T-cell (primary cell): ENCODE measurements at regions of chr17 and their contacts with region 1.

Region 1: GRCh38 chr17:40219073-40219860 is at the start of gene WIPF2:
- DNase-seq: peak; percentile 91 to 98 (median 94)
- ATAC-seq: peak; percentile 91 to 99 (median 97)
- H3K4me3 ChIP-seq: peak within 1 kb of the TSS; percentile 50 to 71
- H3K4me3 Mint-ChIP-seq: peak within 1 kb of the TSS; percentile 87 to 98 (median 95)
- H3K27ac ChIP-seq: peak within 1 kb of the TSS; percentile 92
- H3K27ac Mint-ChIP-seq: peak within 1 kb of the TSS; percentile 100
- H3K4me1 ChIP-seq: peaks cover 8 to 24% of the 10 kb centered on the region in 2 experiments
- H3K4me1 Mint-ChIP-seq: peaks cover 26 to 42% (median 31%) of the 10 kb centered on the region in 3 donors
- H3K27me3 ChIP-seq: no peaks in the 10 kb centered on the region
- H3K27me3 Mint-ChIP-seq: no peaks in the 10 kb centered on the region
- total RNA-seq, gene WIPF2: 23.1 to 42.1 (median 32.1) TPM

Region 2: GRCh38 chr17:38824899-38825761 is 1394.1 kb before region 1 on chr17 and contains the start of gene CWC25:
- CTCF ChIA-PET with region 1: no interaction called
- POLR2A ChIA-PET with region 1: interaction called in 1 of 2 experiments, 12 read pairs
- DNase-seq: peak; percentile 81 to 99 (median 92)
- ATAC-seq: peak; percentile 79 to 87 (median 84)
- H3K4me3 ChIP-seq: peak within 1 kb of the TSS; percentile 67 to 78
- H3K4me3 Mint-ChIP-seq: peak within 1 kb of the TSS; percentile 92 to 97 (median 97)
- H3K27ac ChIP-seq: peak within 1 kb of the TSS; percentile 96
- H3K27ac Mint-ChIP-seq: peak within 1 kb of the TSS; percentile 98 to 99
- H3K4me1 ChIP-seq: peaks cover 6 to 25% of the 10 kb centered on the region in 2 experiments
- H3K4me1 Mint-ChIP-seq: peaks cover 29 to 36% (median 34%) of the 10 kb centered on the region in 3 donors
- H3K27me3 ChIP-seq: no peaks in the 10 kb centered on the region
- H3K27me3 Mint-ChIP-seq: no peaks in the 10 kb centered on the region
- total RNA-seq, gene CWC25: 31.5 to 45.8 (median 44.3) TPM

Region 3: GRCh38 chr17:40203131-40203530 is 16.1 kb before region 1 on chr17:
- CTCF ChIA-PET with region 1: interaction called, 3 to 9 read pairs
- POLR2A ChIA-PET with region 1: interaction called in 1 of 2 experiments, 20 read pairs
- DNase-seq: no peak
- ATAC-seq: no peak
- H3K4me3 ChIP-seq: no peak overlapping the region
- H3K4me3 Mint-ChIP-seq: no peak overlapping the region
- H3K27ac ChIP-seq: no peak overlapping the region
- H3K27ac Mint-ChIP-seq: no peak overlapping the region
- H3K4me1 ChIP-seq: peaks cover 0 to 5% of the 10 kb centered on the region in 2 experiments
- H3K4me1 Mint-ChIP-seq: peaks cover 0 to 4% (median 0%) of the 10 kb centered on the region in 3 donors
- H3K27me3 ChIP-seq: peaks cover 0 to 13% of the 10 kb centered on the region in 2 experiments
- H3K27me3 Mint-ChIP-seq: peaks cover 3 to 12% of the 10 kb centered on the region in 2 donors

Region 4: DNA sequence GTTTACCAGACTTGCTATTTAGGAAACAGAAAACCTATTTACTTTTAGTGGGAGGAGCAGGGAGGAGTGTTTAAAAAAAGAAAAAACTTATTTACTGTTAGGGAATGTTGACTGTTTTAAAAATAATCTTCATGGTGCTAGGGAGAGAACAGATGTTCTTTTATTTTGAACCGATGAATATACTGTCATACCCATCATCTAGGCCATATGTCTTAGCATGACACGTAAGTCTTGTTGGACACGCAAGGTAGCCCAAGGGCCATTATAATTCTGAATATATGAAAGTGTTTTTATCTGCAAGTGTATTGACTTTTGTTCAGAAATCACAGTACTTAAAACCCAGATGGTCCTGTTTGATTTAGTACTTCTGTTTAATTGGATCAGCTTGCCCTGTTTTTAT is 11.4 kb after region 1 on chr17:
- CTCF ChIA-PET with region 1: interaction called in 1 of 2 experiments, 5 read pairs
- POLR2A ChIA-PET with region 1: interaction called, 4 to 12 read pairs
- DNase-seq: no peak
- ATAC-seq: no peak
- H3K4me3 ChIP-seq: no peak overlapping the region
- H3K4me3 Mint-ChIP-seq: no peak overlapping the region
- H3K27ac ChIP-seq: no peak overlapping the region
- H3K27ac Mint-ChIP-seq: no peak overlapping the region
- H3K4me1 ChIP-seq: peaks cover 0 to 2% of the 10 kb centered on the region in 2 experiments
- H3K4me1 Mint-ChIP-seq: peaks cover 27 to 29% (median 29%) of the 10 kb centered on the region in 3 donors
- H3K27me3 ChIP-seq: no peaks in the 10 kb centered on the region
- H3K27me3 Mint-ChIP-seq: no peaks in the 10 kb centered on the region

Region 5: GRCh38 chr17:40480501-40481003 is 261.3 kb after region 1 on chr17:
- CTCF ChIA-PET with region 1: no interaction called
- POLR2A ChIA-PET with region 1: interaction called in 1 of 2 experiments, 10 read pairs
- DNase-seq: peak; percentile 73 to 95 (median 88)
- ATAC-seq: peak; percentile 88 to 92 (median 91)
- H3K4me3 ChIP-seq: peak overlapping the region in 1 of 2 donors; percentile 9
- H3K4me3 Mint-ChIP-seq: peak overlapping the region; percentile 36 to 68 (median 60)
- H3K27ac ChIP-seq: peak overlapping the region; percentile 99
- H3K27ac Mint-ChIP-seq: peak overlapping the region; percentile 94 to 98
- H3K4me1 ChIP-seq: peaks cover 15 to 86% of the 10 kb centered on the region in 2 experiments
- H3K4me1 Mint-ChIP-seq: peaks cover 59 to 80% (median 59%) of the 10 kb centered on the region in 3 donors
- H3K27me3 ChIP-seq: peaks cover 0 to under 1% of the 10 kb centered on the region in 2 experiments
- H3K27me3 Mint-ChIP-seq: no peaks in the 10 kb centered on the region